ENCODE measurements at regions of chr14 and their contacts with region 1.

Region 1: GRCh38 chr14:69263364-69263763 is 3.4 kb downstream of the GALNT16 start:
- DNase-seq: no peak
- ATAC-seq: no peak
- H3K4me3 ChIP-seq: no peak overlapping the region
- H3K4me3 Mint-ChIP-seq: no peak overlapping the region
- H3K27ac ChIP-seq: no peak overlapping the region
- H3K27ac Mint-ChIP-seq: no peak overlapping the region
- H3K4me1 ChIP-seq: peaks cover 0 to 11% of the 10 kb centered on the region in 2 experiments
- H3K4me1 Mint-ChIP-seq: peaks cover 6 to 17% (median 11%) of the 10 kb centered on the region in 3 donors
- H3K27me3 ChIP-seq: peaks cover 21 to 58% of the 10 kb centered on the region in 2 experiments
- H3K27me3 Mint-ChIP-seq: peaks cover 32 to 57% of the 10 kb centered on the region in 2 donors

Region 2: GRCh38 chr14:69387311-69387710 is 123.9 kb after region 1 on chr14:
- CTCF ChIA-PET with region 1: no interaction called
- POLR2A ChIA-PET with region 1: interaction called in 1 of 2 experiments, 12 read pairs
- DNase-seq: no peak
- ATAC-seq: no peak
- H3K4me3 ChIP-seq: no peak overlapping the region
- H3K4me3 Mint-ChIP-seq: no peak overlapping the region
- H3K27ac ChIP-seq: no peak overlapping the region
- H3K27ac Mint-ChIP-seq: no peak overlapping the region
- H3K4me1 ChIP-seq: peaks cover 0 to 9% of the 10 kb centered on the region in 2 experiments
- H3K4me1 Mint-ChIP-seq: peaks cover 56 to 64% (median 62%) of the 10 kb centered on the region in 3 donors
- H3K27me3 ChIP-seq: no peaks in the 10 kb centered on the region
- H3K27me3 Mint-ChIP-seq: no peaks in the 10 kb centered on the region

Measured in T-cell (primary cell).